ENCODE measurements at regions of chr12 and their contacts with region 1.

Region 1: DNA sequence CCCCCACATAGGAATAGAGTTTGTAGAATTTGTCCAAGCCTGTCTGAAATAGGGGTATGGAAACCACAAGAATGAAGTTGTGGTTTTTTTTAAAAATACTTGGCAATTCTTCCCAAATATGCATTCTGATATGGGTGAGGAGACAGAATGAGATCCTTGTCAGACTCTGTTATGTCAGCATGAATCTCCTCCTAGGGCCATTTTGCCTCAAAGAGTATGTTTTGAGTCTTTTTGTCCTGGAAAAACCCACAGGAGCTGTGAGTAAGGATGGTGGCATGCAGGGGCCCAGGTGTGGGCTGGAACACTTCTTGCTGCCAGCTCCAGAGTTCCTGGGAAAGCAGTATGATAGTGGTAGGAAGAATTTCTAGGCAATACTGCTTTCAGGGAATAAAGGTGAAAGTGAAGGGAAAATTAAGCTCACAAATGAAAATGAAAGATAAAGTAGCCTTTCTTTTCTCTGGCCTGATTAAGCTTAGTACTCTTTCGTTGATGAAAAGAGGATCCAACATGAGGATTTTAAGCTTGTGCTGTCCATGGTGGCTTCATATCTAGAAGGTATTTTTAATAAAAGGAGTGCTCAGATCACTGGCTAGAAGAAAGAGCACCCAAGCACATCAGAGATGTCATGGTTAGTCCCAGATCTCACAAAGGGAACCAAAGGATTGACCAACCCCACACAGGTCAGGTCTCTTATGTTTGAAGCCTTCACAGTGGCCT is 130.8 kb downstream of the LLPH start:
- DNase-seq: no peak
- ATAC-seq: no peak
- H3K4me3 ChIP-seq: no peak overlapping the region
- H3K27ac ChIP-seq: no peak overlapping the region
- H3K4me1 ChIP-seq: peaks cover 0 to under 1% (median 0%) of the 10 kb centered on the region in 9 donors
- H3K27me3 ChIP-seq: peaks cover 0 to 10% (median 0%) of the 10 kb centered on the region in 7 donors
- CTCF ChIP-seq: no peak

Region 2: DNA sequence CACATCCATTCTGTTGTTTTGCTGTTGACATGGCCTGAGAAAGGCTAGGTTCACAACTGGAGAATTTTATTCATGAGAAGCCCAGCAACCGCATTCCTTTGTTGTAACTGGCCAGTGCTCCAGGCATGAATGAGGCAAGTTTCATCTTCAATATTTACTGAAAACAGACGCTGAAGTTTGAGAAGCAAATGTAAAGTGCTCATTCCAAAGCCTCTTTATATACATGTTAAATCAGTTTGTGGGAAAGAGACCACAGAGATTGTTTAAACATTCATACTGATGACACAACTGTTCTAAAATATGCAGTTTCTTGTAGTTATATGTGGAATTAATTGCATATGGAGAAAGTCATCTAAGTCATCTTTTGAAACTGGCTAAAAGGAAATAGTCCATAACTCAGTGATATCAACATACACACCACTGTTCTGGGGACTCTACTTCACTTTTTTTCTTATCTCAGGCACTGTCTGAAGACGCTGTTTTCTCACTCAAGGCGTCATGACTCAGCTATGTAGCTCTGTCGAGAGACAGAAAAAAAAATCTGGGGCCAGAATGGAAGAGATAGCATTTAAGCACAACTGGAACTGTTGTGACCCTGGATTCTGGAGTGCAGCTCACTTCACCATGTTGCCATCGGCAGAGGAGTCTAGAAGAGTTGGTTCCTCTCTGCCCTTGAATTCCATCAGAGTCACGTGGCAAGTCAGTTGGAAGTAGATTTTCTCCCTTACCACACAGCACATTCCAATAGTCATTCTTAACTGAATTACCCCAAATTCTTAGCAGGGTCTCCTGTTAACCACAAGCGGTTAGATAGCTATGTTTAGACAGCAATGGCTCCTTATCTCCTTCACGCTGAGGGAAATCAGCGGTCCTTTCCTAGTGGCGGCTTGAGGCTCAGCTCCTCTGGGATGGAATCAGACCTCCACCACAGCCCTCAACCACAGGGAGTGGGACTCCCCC is 433.8 kb before region 1 on chr12:
- intact Hi-C with region 1: loop called in 1 of 10 experiments (anchors 10 kb)
- DNase-seq: no peak
- ATAC-seq: peak in 6 of 8 donors; percentile 25 to 64 (median 45)
- H3K4me3 ChIP-seq: no peak overlapping the region
- H3K27ac ChIP-seq: peak overlapping the region in 5 of 10 donors; percentile 7 to 59 (median 42)
- H3K4me1 ChIP-seq: peaks cover 0 to 36% (median 20%) of the 10 kb centered on the region in 9 donors
- H3K27me3 ChIP-seq: peaks cover 0 to 3% (median 0%) of the 10 kb centered on the region in 7 donors
- CTCF ChIP-seq: no peak

Region 3: DNA sequence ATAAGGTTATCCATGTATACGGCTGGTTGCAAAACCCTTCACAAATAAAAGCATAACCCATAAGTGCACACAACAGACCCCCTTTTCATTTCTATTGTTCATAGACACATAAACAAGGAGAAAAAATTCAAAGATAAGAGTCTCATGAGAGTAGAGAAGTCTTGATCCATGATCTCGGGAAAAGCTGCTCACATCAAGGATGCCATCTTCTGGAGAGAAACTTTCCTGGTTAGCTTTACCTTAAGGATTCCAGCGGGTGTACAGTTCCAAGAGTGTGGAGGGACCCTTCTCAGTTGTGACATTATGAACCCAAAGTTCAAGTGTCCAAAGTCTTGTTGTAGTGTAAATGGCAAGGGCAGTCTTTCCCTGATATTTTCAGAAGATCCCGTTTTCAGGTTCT is 13.7 kb before region 1 on chr12:
- intact Hi-C with region 1: no loop called
- DNase-seq: no peak
- ATAC-seq: no peak
- H3K4me3 ChIP-seq: no peak overlapping the region
- H3K27ac ChIP-seq: no peak overlapping the region
- H3K4me1 ChIP-seq: no peaks in the 10 kb centered on the region
- H3K27me3 ChIP-seq: peaks cover 0 to 8% (median 0%) of the 10 kb centered on the region in 7 donors
- CTCF ChIP-seq: peak in 2 of 9 donors; percentile 7 to 25